ENCODE measurements at regions of chr10 and their contacts with region 1.

Region 1: DNA sequence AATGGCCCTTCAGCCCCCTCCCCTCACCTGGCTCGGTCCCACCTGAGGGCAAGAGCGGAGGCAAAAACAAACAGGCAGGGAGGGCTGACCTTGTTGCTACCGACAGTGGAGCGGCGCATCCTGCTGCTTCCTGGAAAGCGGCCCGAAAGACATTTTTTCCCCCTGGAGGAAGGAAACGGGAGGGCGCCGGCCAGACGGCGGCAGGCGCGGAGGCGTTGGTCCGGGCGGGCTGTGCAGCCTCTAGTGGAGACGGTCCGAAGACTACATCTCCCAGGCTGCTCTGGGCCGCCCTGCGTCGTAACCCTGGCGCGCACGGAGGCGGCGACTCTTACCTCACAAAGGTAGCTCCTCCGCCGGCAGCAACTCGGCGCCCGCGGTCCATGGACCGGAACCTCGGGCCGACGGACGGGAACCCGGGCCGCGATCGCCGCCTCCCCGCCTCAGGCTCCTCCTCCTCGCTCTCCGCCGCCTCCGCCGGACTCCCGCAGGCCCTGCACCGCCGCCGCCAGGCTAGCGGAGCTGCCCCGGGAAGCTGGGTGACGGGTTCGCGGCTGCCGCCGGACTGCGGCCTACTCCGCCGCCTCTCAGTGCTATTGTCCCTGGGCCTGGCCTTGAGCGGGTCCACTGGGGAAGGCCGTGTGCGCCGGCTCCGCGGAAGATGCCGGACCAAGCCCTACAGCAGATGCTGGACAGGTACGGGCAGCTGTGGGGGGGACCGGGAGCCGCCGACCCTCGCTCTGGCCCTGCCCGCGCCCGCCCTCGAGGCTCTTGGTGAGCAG is at the starts of genes CPEB3 and MARCHF5:
- DNase-seq: peak; percentile 100
- H3K4me3 ChIP-seq: peak within 1 kb of the TSS; percentile 73 to 95 (median 81)
- H3K27ac ChIP-seq: peak within 1 kb of the TSS; percentile 92 to 97 (median 95)
- H3K4me1 ChIP-seq: peaks cover 4 to 58% (median 27%) of the 10 kb centered on the region in 6 donors
- H3K27me3 ChIP-seq: no peaks in the 10 kb centered on the region
- CTCF ChIP-seq: peak; percentile 70 to 92 (median 81)
- POLR2A ChIP-seq: peak in 2 of 3 donors; percentile 21 to 46
- total RNA-seq, gene CPEB3: 5.5 to 10.1 (median 8.0) TPM
- total RNA-seq, gene MARCHF5: 17.0 to 39.1 (median 29.1) TPM

Region 2: GRCh38 chr10:92087750-92088395 is 203.2 kb before region 1 on chr10:
- intact Hi-C with region 1: loop called (anchors 5 kb)
- DNase-seq: no peak
- H3K4me3 ChIP-seq: no peak overlapping the region
- H3K27ac ChIP-seq: no peak overlapping the region
- H3K4me1 ChIP-seq: peaks cover 0 to 15% (median 8%) of the 10 kb centered on the region in 6 donors
- H3K27me3 ChIP-seq: no peaks in the 10 kb centered on the region
- CTCF ChIP-seq: peak; percentile 49 to 94 (median 74)
- POLR2A ChIP-seq: no peak

Region 3: DNA sequence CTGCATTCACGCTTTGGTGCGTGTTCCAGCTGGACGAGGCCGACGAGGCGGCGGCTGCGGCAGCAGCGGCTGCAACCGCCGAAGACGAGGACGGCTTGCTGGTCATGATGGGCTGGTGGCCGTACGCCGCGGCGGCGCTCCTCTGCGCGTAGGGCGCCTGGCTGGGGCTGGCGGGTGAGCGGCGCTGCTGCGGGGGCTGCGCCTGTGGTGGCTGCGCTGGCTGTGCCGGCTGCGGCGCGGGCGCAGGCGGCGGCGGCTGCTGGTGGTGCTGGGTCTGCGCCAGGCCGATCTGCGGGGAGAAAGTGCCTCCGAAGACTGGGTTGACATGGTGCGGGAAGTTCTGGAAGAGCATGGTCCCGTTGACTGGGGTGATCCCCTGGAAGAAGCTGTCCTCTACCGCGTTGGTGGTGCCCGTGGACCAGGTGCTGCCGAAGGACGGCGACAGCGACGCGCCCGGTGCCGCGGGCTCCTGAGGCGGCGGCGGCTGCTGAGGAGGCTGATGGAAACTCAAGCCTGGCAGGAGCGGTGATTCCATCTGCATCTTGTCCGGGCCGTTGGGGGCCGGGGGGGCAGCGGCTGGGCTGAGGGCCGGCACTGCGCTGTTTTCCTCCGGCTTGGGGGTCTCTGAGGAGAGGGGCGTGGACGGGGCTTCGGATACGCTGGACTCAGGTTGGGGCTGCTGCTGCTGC is 51.3 kb before region 1 on chr10:
- intact Hi-C with region 1: loop called (anchors 10 kb)
- DNase-seq: peak; percentile 90
- H3K4me3 ChIP-seq: peak overlapping the region; percentile 57 to 92 (median 76)
- H3K27ac ChIP-seq: peak overlapping the region; percentile 58 to 97 (median 90)
- H3K4me1 ChIP-seq: peaks cover 17 to 78% (median 58%) of the 10 kb centered on the region in 6 donors
- H3K27me3 ChIP-seq: no peaks in the 10 kb centered on the region
- CTCF ChIP-seq: no peak
- POLR2A ChIP-seq: no peak

Measured in spleen (tissue), 13 donors.